ENCODE measurements at regions of chr15 and their contacts with region 1.

Region 1: GRCh38 chr15:99704444-99704838 is 28.8 kb downstream of the LYSMD4 start:
- DNase-seq: peak in 1 of 2 experiments; percentile 72
- H3K4me3 ChIP-seq: no peak overlapping the region
- H3K4me3 Mint-ChIP-seq: no peak overlapping the region
- H3K27ac Mint-ChIP-seq: no peak overlapping the region
- H3K4me1 ChIP-seq: peaks cover 3% of the 10 kb centered on the region; the same call in 1 of the 2 replicates
- H3K4me1 Mint-ChIP-seq: peaks cover 12% of the 10 kb centered on the region
- H3K27me3 ChIP-seq: no peaks in the 10 kb centered on the region
- H3K27me3 Mint-ChIP-seq: no peaks in the 10 kb centered on the region
- CTCF ChIP-seq: peak; percentile 42 to 64

Region 2: GRCh38 chr15:99282121-99282520 is 422.3 kb before region 1 on chr15:
- CTCF ChIA-PET with region 1: interaction called, 5 read pairs
- POLR2A ChIA-PET with region 1: no interaction called
- intact Hi-C with region 1: loop called (anchors 1 kb)
- DNase-seq: no peak
- H3K4me3 ChIP-seq: no peak overlapping the region
- H3K4me3 Mint-ChIP-seq: no peak overlapping the region
- H3K27ac Mint-ChIP-seq: no peak overlapping the region
- H3K4me1 ChIP-seq: no peaks in the 10 kb centered on the region
- H3K4me1 Mint-ChIP-seq: no peaks in the 10 kb centered on the region
- H3K27me3 ChIP-seq: no peaks in the 10 kb centered on the region
- H3K27me3 Mint-ChIP-seq: no peaks in the 10 kb centered on the region
- CTCF ChIP-seq: no peak

Region 3: DNA sequence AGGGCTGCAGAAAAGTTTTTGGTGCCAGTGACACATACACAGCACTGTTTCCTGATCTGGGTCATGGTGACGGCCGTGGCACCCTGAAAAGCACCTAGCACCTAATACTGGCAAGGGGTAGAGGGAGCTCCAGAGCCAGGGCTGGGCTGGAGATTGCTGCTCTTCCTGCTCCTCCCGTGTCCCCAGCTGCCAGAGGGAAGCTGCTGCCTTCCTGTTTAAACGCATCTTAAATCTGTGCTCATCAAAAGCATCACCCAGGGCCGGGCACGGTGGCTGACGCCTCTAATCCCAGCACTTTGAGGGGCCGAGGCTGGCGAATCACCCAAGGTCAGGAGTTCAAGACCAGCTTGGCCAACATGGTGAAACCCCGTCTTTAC is 295.4 kb before region 1 on chr15:
- CTCF ChIA-PET with region 1: interaction called, 16 read pairs
- POLR2A ChIA-PET with region 1: no interaction called
- intact Hi-C with region 1: loop called (anchors 1 kb)
- DNase-seq: peak in 1 of 2 experiments; percentile 28
- H3K4me3 ChIP-seq: no peak overlapping the region
- H3K4me3 Mint-ChIP-seq: no peak overlapping the region
- H3K27ac Mint-ChIP-seq: no peak overlapping the region
- H3K4me1 ChIP-seq: no peaks in the 10 kb centered on the region
- H3K4me1 Mint-ChIP-seq: no peaks in the 10 kb centered on the region
- H3K27me3 ChIP-seq: no peaks in the 10 kb centered on the region
- H3K27me3 Mint-ChIP-seq: no peaks in the 10 kb centered on the region
- CTCF ChIP-seq: peak; percentile 30 to 48

Region 4: DNA sequence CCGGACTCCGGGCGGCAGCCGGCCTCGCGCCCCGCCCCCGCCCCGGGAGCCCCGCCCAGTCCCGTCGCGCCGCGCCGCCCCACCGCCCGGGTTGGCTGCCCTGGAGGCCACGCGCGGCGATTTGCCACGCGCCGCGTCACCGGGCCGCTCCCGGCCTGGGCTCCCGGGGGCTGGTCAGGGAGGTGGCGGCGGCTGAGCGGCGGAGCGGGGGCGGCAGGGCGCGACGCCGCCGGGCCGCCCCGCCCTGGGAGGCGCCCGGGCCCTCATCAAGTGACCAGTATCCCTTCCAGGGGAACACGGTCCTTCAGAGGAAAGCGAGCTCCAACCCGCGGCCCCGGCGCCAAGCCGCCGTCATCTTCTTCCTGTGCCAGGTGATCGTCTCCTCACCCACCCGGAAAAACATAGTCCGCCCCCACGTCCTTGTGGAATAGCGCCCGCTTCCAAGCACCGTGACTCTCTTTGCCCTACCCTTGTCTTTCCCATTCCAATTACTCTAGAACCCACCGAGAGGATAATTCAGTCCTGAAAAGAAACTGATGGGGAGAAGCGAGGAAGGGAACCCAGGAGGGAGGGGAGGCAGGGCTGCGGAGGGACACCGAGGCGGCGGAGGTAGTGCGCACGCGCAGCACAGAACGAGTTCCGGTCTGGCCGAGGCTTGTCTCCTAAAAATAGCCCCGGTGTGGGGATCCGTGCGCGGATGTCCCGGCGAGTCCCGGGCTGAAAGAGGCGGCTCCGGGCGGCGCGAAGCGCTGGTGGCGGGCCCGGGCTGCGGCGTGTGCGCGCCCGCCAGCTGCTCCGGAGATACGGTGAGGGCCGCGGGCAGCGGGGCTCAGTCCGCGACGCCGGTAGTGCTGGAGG is 138.9 kb before region 1 on chr15 and contains the start of gene MEF2A:
- CTCF ChIA-PET with region 1: interaction called, 7 read pairs
- POLR2A ChIA-PET with region 1: interaction called, 4 read pairs
- intact Hi-C with region 1: loop called (anchors 5 kb)
- DNase-seq: peak; percentile 94 to 95
- H3K4me3 ChIP-seq: peak within 1 kb of the TSS; percentile 65
- H3K4me3 Mint-ChIP-seq: peak within 1 kb of the TSS; percentile 86
- H3K27ac Mint-ChIP-seq: peak within 1 kb of the TSS; percentile 72
- H3K4me1 ChIP-seq: no peaks in the 10 kb centered on the region; the same call in 1 of the 2 replicates
- H3K4me1 Mint-ChIP-seq: no peaks in the 10 kb centered on the region
- H3K27me3 ChIP-seq: no peaks in the 10 kb centered on the region
- H3K27me3 Mint-ChIP-seq: no peaks in the 10 kb centered on the region
- CTCF ChIP-seq: no peak
- total RNA-seq, gene MEF2A: 19.5 and 19.6 TPM in 2 replicates

Region 5: DNA sequence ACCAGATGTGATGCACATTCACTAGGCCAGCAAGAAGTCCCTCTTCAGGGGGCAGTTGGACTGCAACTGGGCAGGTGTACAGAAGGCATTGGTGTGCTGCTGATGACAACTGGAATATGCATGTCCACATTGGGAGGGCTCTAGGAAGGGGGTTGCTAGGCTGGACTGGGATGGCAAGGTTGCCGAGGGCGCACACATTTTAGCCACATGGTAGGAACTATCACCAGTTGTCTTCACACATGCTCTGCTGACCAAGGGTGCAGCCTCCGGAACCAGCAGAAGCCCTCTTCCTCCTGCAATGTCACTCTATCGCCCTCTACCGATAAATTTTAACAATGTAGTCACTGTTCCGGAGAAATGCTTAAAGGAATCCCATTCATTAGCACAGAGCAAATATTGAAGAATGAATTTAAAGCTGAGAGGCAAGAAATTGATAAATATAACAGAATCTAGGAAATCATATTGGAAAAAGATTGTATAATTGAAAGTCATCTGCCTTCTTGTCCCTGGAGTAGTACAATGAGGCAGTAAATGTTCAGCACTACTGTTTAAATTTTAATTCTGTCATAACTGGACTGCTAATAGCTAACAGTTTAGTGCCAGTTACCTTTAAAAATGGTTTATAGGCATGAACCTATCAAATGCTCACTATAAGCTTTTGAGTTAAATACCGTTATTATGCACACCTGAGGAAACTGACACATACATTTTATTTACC is 51.4 kb after region 1 on chr15:
- CTCF ChIA-PET with region 1: interaction called, 11 read pairs
- POLR2A ChIA-PET with region 1: no interaction called
- intact Hi-C with region 1: loop called (anchors 1 kb)
- DNase-seq: peak; percentile 44 to 65
- H3K4me3 ChIP-seq: no peak overlapping the region
- H3K4me3 Mint-ChIP-seq: no peak overlapping the region
- H3K27ac Mint-ChIP-seq: no peak overlapping the region
- H3K4me1 ChIP-seq: no peaks in the 10 kb centered on the region
- H3K4me1 Mint-ChIP-seq: no peaks in the 10 kb centered on the region
- H3K27me3 ChIP-seq: no peaks in the 10 kb centered on the region
- H3K27me3 Mint-ChIP-seq: no peaks in the 10 kb centered on the region
- CTCF ChIP-seq: peak; percentile 72 to 74

Measured in Caco-2 (cell line).